ENCODE measurements at regions of chr20 and their contacts with region 1.

Region 1: DNA sequence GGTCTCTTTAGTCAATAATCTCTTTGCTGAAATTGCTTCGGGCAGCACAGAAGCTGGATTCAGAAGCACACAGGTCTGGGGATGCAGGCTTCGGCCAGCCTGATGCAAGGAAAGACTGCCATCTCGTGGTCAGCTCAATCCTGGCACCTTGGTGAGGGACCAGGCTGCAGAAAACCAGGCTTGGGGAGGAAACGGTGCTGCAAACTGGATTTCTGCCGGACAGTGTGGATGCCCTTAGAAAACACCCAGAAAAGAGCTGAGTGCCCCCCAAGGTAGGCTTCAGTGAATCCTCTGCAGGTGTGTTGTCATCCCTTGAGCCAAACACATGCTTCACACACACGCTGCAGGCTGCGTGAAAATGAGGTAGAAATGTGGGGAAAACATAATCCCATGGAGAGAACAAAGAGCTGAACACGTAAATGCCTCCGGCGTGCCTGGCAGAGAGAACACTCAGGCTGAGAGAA is 89.8 kb upstream of the PAX1 start:
- DNase-seq: peak; percentile 73
- H3K4me3 Mint-ChIP-seq: no peak overlapping the region
- H3K27ac Mint-ChIP-seq: no peak overlapping the region
- H3K4me1 Mint-ChIP-seq: no peaks in the 10 kb centered on the region
- H3K27me3 Mint-ChIP-seq: peaks cover 42% of the 10 kb centered on the region

Region 2: GRCh38 chr20:21513881-21514540 is 101.6 kb before region 1 on chr20 and contains the start of gene NKX2-2:
- CTCF ChIA-PET with region 1: no interaction called
- intact Hi-C with region 1: no loop called
- DNase-seq: no peak
- H3K4me3 Mint-ChIP-seq: peak within 1 kb of the TSS; percentile 42
- H3K27ac Mint-ChIP-seq: no peak within 1 kb of the TSS
- H3K4me1 Mint-ChIP-seq: peaks cover 64% of the 10 kb centered on the region
- H3K27me3 Mint-ChIP-seq: peaks cover 80% of the 10 kb centered on the region
- total RNA-seq, gene NKX2-2: not detected

Region 3: DNA sequence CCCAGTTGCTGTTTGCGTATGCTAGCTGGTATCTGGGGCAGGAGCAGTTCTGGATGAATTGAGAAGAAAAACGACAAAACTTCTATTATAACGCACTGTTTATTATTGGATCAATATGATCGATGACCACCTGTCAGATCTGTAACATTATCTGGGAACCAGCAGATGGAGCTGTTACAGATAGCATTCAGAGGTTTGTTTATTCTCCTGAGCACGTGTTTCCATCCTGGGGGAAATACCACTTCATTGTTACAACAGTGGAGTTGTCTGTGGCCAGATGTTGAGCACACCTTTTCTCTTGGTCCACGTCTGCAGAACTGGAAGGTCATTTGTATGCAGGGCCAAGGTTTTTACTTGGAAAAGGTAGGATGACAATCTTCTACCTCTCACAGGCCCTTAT is 85.8 kb before region 1 on chr20:
- CTCF ChIA-PET with region 1: interaction called, 13 read pairs
- intact Hi-C with region 1: loop called (anchors 1 kb)
- DNase-seq: no peak
- H3K4me3 Mint-ChIP-seq: no peak overlapping the region
- H3K27ac Mint-ChIP-seq: no peak overlapping the region
- H3K4me1 Mint-ChIP-seq: peaks cover 3% of the 10 kb centered on the region
- H3K27me3 Mint-ChIP-seq: peaks cover 19% of the 10 kb centered on the region

Region 4: GRCh38 chr20:21601799-21602198 is 13.8 kb before region 1 on chr20:
- CTCF ChIA-PET with region 1: interaction called, 12 read pairs
- intact Hi-C with region 1: no loop called
- DNase-seq: no peak
- H3K4me3 Mint-ChIP-seq: no peak overlapping the region
- H3K27ac Mint-ChIP-seq: no peak overlapping the region
- H3K4me1 Mint-ChIP-seq: no peaks in the 10 kb centered on the region
- H3K27me3 Mint-ChIP-seq: peaks cover 23% of the 10 kb centered on the region